Psoas muscle (tissue), 8 donors: ENCODE measurements at regions of chr2 and their contacts with region 1.

Region 1: GRCh38 chr2:128145651-128146050 is 54.7 kb downstream of the UGGT1 start:
- DNase-seq: no peak
- ATAC-seq: no peak
- H3K4me3 ChIP-seq: no peak overlapping the region
- H3K27ac ChIP-seq: no peak overlapping the region
- H3K4me1 ChIP-seq: no peaks in the 10 kb centered on the region
- H3K27me3 ChIP-seq: no peaks in the 10 kb centered on the region
- CTCF ChIP-seq: no peak

Region 2: DNA sequence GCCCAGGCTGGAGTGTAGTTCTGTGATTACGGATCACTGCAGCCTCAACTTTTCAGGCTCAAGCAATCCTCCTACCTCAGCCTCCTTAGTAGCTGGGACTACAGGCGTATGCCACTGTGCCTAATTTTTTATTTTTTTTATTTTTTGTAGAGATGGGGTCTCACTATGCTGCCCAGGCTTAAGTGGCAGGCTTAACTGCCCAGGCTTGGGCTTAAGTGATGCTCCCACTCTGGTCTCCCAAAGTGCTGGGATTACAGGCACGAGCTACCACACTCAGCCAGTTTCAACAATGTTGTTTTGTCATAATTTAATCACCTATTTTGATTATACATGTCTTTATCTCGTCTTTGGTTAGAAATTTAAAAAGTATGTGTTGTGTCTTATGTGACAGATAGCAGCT is 36.4 kb before region 1 on chr2:
- intact Hi-C with region 1: loop called in 1 of 2 experiments (anchors 1 kb)
- DNase-seq: no peak
- ATAC-seq: no peak
- H3K4me3 ChIP-seq: no peak overlapping the region
- H3K27ac ChIP-seq: no peak overlapping the region
- H3K4me1 ChIP-seq: no peaks in the 10 kb centered on the region
- H3K27me3 ChIP-seq: no peaks in the 10 kb centered on the region
- CTCF ChIP-seq: no peak

Region 3: GRCh38 chr2:128379021-128380015 is 233.7 kb after region 1 on chr2:
- intact Hi-C with region 1: no loop called
- DNase-seq: no peak
- ATAC-seq: peak in 1 of 4 donors; percentile 42
- H3K4me3 ChIP-seq: no peak overlapping the region
- H3K27ac ChIP-seq: no peak overlapping the region
- H3K4me1 ChIP-seq: no peaks in the 10 kb centered on the region
- H3K27me3 ChIP-seq: no peaks in the 10 kb centered on the region
- CTCF ChIP-seq: no peak

Region 4: DNA sequence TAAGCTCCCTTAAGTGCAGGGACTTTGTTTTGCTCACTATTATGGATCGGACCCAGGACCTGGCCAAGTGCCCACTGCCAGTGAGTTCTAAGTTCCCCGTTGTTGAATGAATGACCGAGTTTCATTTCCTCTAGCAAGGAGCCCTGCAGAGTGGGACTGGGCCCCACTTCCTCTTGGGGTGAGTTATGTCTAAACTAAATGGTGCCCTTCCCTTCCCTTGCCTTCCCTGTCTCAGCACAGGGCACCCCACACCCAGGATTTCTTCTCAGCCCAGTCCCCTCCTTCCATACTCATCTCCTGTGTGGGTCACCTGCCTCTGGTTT is 368.3 kb after region 1 on chr2:
- intact Hi-C with region 1: no loop called
- DNase-seq: no peak
- ATAC-seq: no peak
- H3K4me3 ChIP-seq: no peak overlapping the region
- H3K27ac ChIP-seq: no peak overlapping the region
- H3K4me1 ChIP-seq: no peaks in the 10 kb centered on the region
- H3K27me3 ChIP-seq: no peaks in the 10 kb centered on the region
- CTCF ChIP-seq: no peak